GM13976 (cell line): ENCODE measurements at regions of chr11 and their contacts with region 1.

Region 1: GRCh38 chr11:59545179-59546020 is 34.1 kb downstream of the OR4D9 start:
- DNase-seq: no peak
- CTCF ChIP-seq: no peak

Region 2: GRCh38 chr11:59810189-59810910 is 264.9 kb after region 1 on chr11 and contains the start of gene MRPL16:
- in situ Hi-C with region 1: loop called (anchors 25 kb)
- DNase-seq: peak; percentile 89
- CTCF ChIP-seq: no peak

Region 3: GRCh38 chr11:59841514-59841913 is 296.1 kb after region 1 on chr11:
- in situ Hi-C with region 1: no loop called
- DNase-seq: no peak
- CTCF ChIP-seq: no peak